Esophagus muscularis mucosa (tissue), 4 donors: ENCODE measurements at regions of chr7 and their contacts with region 1.

Region 1: DNA sequence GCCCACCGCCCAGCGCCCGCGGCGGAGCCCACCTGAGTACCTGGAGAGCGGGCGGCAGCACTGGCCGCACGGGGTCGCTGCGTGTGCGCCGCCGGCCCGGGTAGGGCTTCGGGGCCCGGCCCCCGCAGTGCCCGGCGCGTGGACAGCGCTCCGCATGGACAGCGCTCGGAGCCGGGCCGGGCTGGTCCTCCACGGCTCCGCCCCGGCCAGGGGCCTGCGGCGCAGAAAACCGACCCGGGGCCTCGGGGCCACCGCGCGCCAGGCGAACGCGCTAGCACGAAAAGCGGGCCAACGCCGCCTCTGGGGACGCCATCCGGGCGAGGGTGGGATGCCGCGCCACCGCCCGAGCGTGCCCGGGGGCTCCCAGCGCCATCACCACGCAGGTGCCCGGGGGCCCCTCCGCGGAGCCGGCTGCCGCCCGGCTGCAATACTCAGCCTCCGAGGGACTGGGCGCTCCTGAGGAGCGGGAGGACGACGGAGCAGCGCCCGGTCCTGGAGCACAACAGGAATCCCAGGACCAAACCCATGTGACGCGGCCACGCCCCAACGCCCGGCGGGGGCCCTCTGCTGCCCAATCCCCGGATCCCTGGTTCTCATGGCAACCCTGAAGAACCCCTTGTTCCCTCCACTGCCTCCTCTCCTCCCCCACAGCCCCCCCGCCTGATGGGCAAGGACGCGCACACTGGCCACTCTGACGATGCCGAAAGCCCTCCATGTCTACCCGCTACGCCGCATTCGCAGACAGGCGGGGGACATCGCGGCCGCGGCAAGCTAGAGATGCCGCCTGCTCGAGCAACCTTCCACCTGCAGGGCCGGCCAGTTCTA is at the start of gene GRB10:
- DNase-seq: no peak
- H3K4me3 ChIP-seq: peak within 1 kb of the TSS; percentile 62 to 69 (median 63)
- H3K27ac ChIP-seq: peak within 1 kb of the TSS; percentile 39 to 73 (median 66)
- H3K4me1 ChIP-seq: peaks cover 30 to 67% (median 63%) of the 10 kb centered on the region in 4 donors
- H3K27me3 ChIP-seq: no peaks in the 10 kb centered on the region
- CTCF ChIP-seq: peak; percentile 30 to 51 (median 31)
- EP300 ChIP-seq: no peak
- POLR2A ChIP-seq: no peak
- total RNA-seq, gene GRB10: 54.0 to 69.1 (median 61.6) TPM

Region 2: GRCh38 chr7:50728184-50728583 is 54.4 kb before region 1 on chr7:
- intact Hi-C with region 1: no loop called
- DNase-seq: no peak
- H3K4me3 ChIP-seq: no peak overlapping the region
- H3K27ac ChIP-seq: peak overlapping the region in 2 of 4 donors; percentile 20 to 53
- H3K4me1 ChIP-seq: peaks cover 43 to 68% (median 57%) of the 10 kb centered on the region in 4 donors
- H3K27me3 ChIP-seq: no peaks in the 10 kb centered on the region
- CTCF ChIP-seq: no peak
- EP300 ChIP-seq: no peak
- POLR2A ChIP-seq: no peak

Region 3: DNA sequence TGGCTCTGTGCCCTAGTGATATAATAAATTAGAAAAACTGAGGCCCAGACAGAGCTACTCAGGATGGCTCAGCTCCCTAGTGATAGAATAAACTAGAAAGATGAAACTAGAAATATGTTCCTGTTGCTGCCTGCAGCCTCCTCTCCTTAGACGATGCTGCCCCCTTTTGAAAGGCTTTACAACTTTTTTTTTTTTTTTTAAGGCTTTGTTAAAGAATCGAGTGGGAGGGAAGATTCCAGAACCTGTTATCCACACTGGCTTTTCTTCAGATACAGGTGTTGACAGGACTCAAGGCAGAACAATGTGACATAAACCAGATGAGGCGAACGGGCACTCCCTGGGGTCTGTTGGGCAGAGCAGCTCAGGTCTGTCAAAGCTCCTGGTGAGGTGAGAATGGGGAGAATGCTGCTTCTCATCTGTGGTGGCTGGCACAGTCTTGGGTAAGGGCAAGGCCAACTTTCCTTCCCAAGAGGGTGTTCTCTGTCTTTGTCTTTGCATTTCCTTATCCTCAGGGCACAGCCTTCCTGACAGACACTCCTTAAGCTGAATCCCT is 358.9 kb after region 1 on chr7:
- intact Hi-C with region 1: loop called (anchors 10 kb)
- DNase-seq: peak; percentile 83
- H3K4me3 ChIP-seq: no peak overlapping the region
- H3K27ac ChIP-seq: peak overlapping the region in 2 of 4 donors; percentile 15 to 18
- H3K4me1 ChIP-seq: peaks cover 21 to 42% (median 33%) of the 10 kb centered on the region in 4 donors
- H3K27me3 ChIP-seq: no peaks in the 10 kb centered on the region
- CTCF ChIP-seq: peak; percentile 55 to 66 (median 66)
- EP300 ChIP-seq: no peak
- POLR2A ChIP-seq: no peak